ENCODE measurements at regions of chr16 and their contacts with region 1.

Region 1: GRCh38 chr16:85114909-85115567 is 2.8 kb upstream of the CIBAR2 start:
- DNase-seq: peak; percentile 69
- H3K4me3 ChIP-seq: no peak overlapping the region
- H3K27ac ChIP-seq: no peak overlapping the region
- H3K4me1 ChIP-seq: no peaks in the 10 kb centered on the region
- H3K27me3 ChIP-seq: no peaks in the 10 kb centered on the region
- CTCF ChIP-seq: peak; percentile 88 to 96 (median 92)
- POLR2A ChIP-seq: no peak

Region 2: GRCh38 chr16:85240982-85241924 is 126.2 kb after region 1 on chr16:
- intact Hi-C with region 1: loop called (anchors 5 kb)
- DNase-seq: no peak
- H3K4me3 ChIP-seq: no peak overlapping the region
- H3K27ac ChIP-seq: no peak overlapping the region
- H3K4me1 ChIP-seq: no peaks in the 10 kb centered on the region
- H3K27me3 ChIP-seq: no peaks in the 10 kb centered on the region
- CTCF ChIP-seq: no peak
- POLR2A ChIP-seq: no peak

Measured in prostate gland (tissue), 2 donors.